SK-N-SH (cell line): ENCODE measurements at regions of chr12 and their contacts with region 1.

Region 1: GRCh38 chr12:48977315-48978281 is 524 bp upstream of the WNT1 start:
- DNase-seq: peak; percentile 91
- H3K4me3 ChIP-seq: peak overlapping the region in 1 of 2 experiments; percentile 32; a peak in 1 of 4 replicates
- H3K27ac ChIP-seq: no peak overlapping the region
- H3K4me1 ChIP-seq: peaks cover 0 to 26% of the 10 kb centered on the region in 2 experiments; a peak in 1 of 4 replicates
- H3K27me3 ChIP-seq: peaks cover 66% of the 10 kb centered on the region
- CTCF ChIP-seq: peak; percentile 70
- EP300 ChIP-seq: no peak
- RAD21 ChIP-seq: peak; percentile 29; the same call in 1 of the 2 replicates

Region 2: DNA sequence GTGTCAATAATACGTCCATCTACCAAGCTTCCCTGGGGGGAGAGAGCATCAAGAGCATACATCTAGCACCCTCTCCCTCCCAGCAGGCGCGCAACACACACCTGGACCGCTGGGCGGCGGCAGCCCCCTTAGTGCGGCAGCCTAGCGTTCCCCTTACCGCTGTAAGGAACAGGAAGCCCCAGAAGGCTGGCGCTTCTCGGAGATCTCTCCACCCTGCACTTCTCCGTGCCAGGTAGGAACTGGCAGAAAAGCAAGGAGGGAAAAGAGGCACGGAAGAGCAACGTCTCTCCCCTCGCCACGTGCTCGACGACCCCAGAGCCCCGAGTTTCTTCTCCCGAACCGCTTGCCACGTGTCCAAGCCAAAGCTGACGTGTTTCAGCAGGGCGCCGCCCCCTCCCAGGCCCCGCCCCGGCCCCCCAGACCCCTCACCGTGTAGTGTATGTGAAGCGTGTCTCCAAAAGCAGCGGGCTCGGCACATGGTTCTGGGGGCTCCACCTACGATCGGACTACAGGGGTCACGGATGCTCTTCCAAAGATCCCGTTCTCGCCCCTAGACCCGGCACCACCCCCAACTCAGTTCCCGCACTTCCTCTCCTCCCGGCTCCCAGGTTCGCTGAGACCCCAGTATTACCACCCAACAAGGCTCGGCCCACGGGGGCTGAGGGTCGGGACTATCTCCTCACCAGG is 52.8 kb before region 1 on chr12:
- CTCF ChIA-PET with region 1: interaction called, 20 read pairs
- POLR2A ChIA-PET with region 1: no interaction called
- DNase-seq: peak; percentile 77
- H3K4me3 ChIP-seq: peak overlapping the region; percentile 52 to 57; a peak in 3 of 4 replicates
- H3K27ac ChIP-seq: no peak overlapping the region
- H3K4me1 ChIP-seq: no peaks in the 10 kb centered on the region; a peak in 1 of 4 replicates
- H3K27me3 ChIP-seq: no peaks in the 10 kb centered on the region
- CTCF ChIP-seq: peak; percentile 36
- EP300 ChIP-seq: no peak
- RAD21 ChIP-seq: peak; percentile 44

Region 3: GRCh38 chr12:48995061-48995879 is 17.7 kb after region 1 on chr12:
- CTCF ChIA-PET with region 1: interaction called, 935 read pairs
- POLR2A ChIA-PET with region 1: no interaction called
- DNase-seq: peak; percentile 98
- H3K4me3 ChIP-seq: peak overlapping the region; percentile 1 to 41; a peak in 1 of 4 replicates
- H3K27ac ChIP-seq: no peak overlapping the region
- H3K4me1 ChIP-seq: peaks cover 9 to 17% of the 10 kb centered on the region in 2 experiments; a peak in 3 of 4 replicates
- H3K27me3 ChIP-seq: no peaks in the 10 kb centered on the region; the same call in 1 of the 2 replicates
- CTCF ChIP-seq: peak; percentile 70
- EP300 ChIP-seq: no peak
- RAD21 ChIP-seq: peak; percentile 86

Region 4: GRCh38 chr12:49052451-49053208 is 75.0 kb after region 1 on chr12:
- CTCF ChIA-PET with region 1: no interaction called
- POLR2A ChIA-PET with region 1: no interaction called
- DNase-seq: no peak
- H3K4me3 ChIP-seq: no peak overlapping the region
- H3K27ac ChIP-seq: no peak overlapping the region
- H3K4me1 ChIP-seq: peaks cover 21 to 24% of the 10 kb centered on the region in 2 experiments
- H3K27me3 ChIP-seq: no peaks in the 10 kb centered on the region
- CTCF ChIP-seq: no peak
- EP300 ChIP-seq: no peak
- RAD21 ChIP-seq: no peak

Region 5: GRCh38 chr12:49154221-49154620 is 176.6 kb after region 1 on chr12:
- CTCF ChIA-PET with region 1: no interaction called
- POLR2A ChIA-PET with region 1: no interaction called
- DNase-seq: no peak
- H3K4me3 ChIP-seq: no peak overlapping the region
- H3K27ac ChIP-seq: no peak overlapping the region
- H3K4me1 ChIP-seq: no peaks in the 10 kb centered on the region
- H3K27me3 ChIP-seq: no peaks in the 10 kb centered on the region
- CTCF ChIP-seq: no peak
- EP300 ChIP-seq: no peak
- RAD21 ChIP-seq: no peak

Region 6: GRCh38 chr12:49413796-49414195 is 436.2 kb after region 1 on chr12:
- CTCF ChIA-PET with region 1: no interaction called
- POLR2A ChIA-PET with region 1: no interaction called
- DNase-seq: no peak
- H3K4me3 ChIP-seq: no peak overlapping the region
- H3K27ac ChIP-seq: no peak overlapping the region
- H3K4me1 ChIP-seq: peaks cover 0 to 6% of the 10 kb centered on the region in 2 experiments; a peak in 1 of 4 replicates
- H3K27me3 ChIP-seq: no peaks in the 10 kb centered on the region
- CTCF ChIP-seq: no peak
- EP300 ChIP-seq: no peak
- RAD21 ChIP-seq: no peak